Activated CD8-positive, alpha-beta T cell treated with anti-CD3 and anti-CD28 coated beads for 36 hours (primary cell): ENCODE measurements at regions of chr2 and their contacts with region 1.

Region 1: DNA sequence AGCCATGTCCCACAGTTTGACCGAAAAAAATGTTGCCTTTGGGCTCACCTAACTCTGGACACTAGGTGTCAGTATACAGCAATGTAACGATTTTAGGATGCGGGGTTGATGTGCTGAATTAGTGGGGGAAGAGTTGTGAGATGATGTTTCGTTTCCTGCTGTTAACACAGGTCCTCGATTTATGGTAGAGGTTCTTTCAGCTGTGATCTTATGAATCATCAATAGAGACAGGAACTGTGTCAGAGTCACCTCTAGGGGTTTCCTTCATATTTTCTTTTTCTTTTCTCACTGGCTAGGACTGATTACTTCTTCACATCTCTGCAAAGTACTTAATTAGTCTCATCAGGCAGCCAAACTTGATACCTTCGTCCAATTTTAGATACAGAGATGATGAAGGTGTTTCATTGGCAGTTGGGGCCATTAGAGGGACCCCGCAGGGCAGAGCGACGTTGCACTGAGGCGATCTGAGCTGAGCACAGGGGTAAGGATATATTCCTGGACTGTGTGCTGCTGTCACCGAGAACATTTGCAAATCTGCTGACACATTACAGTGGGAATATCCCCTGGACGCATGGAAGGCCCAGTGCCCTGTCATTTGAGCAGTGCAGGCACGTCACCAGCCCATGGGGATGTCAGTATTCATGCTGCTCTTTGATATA is 10.2 kb upstream of the MMADHC start:
- DNase-seq: peak; percentile 59
- ATAC-seq: peak; percentile 100
- H3K4me3 Mint-ChIP-seq: peak overlapping the region; percentile 14
- H3K27ac Mint-ChIP-seq: peak overlapping the region; percentile 44
- H3K4me1 Mint-ChIP-seq: peaks cover 22% of the 10 kb centered on the region
- H3K27me3 Mint-ChIP-seq: peaks cover 9% of the 10 kb centered on the region
- CTCF ChIP-seq: peak; percentile 71

Region 2: DNA sequence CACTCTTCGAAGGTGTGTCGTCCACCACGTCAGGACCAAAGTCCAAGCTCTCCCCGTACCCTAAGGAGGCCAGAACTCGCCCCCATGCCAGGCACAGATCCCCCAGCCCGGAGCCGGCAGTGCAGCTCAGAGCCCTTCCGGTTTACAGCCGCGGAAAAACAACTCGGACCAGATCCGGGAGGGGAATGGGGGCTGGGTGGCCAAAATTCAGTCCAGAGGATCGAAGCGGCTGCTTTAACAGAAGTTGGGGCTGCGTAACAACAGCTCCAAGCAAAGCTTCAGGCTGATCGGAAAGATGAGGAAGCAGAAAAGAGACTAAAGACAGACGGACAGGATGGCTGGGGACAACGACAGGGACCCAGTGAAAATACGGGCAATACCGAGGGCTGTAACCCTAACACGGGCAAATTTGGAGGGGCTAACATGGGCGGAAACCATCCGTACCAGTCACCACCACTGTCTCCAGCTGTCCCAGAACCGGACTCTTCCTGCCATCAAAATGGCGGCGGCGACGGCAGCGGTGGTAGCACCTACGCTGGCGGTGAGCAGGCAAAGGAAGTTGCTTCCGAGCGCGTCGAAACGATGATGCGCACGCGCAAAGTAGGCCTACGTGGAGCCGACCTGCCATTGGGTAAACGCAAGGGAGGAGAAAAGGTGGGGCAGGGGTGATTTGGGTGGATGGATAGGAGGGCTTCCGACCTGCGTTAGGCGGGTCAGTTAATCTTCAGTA is 10.4 kb before region 1 on chr2 and contains the start of gene MMADHC:
- CTCF ChIA-PET with region 1: interaction called, 22 read pairs
- POLR2A ChIA-PET with region 1: interaction called, 6 read pairs
- intact Hi-C with region 1: no loop called
- DNase-seq: peak; percentile 95
- ATAC-seq: peak; percentile 98
- H3K4me3 Mint-ChIP-seq: peak within 1 kb of the TSS; percentile 95
- H3K27ac Mint-ChIP-seq: peak within 1 kb of the TSS; percentile 98
- H3K4me1 Mint-ChIP-seq: peaks cover 39% of the 10 kb centered on the region
- H3K27me3 Mint-ChIP-seq: peaks cover 12% of the 10 kb centered on the region
- CTCF ChIP-seq: no peak
- total RNA-seq, gene MMADHC: 130 to 132 TPM

Region 3: GRCh38 chr2:150487537-150488429 is 890.0 kb after region 1 on chr2 and contains the start of gene RND3:
- CTCF ChIA-PET with region 1: interaction called, 5 read pairs
- POLR2A ChIA-PET with region 1: no interaction called
- intact Hi-C with region 1: loop called (anchors 5 kb)
- DNase-seq: peak; percentile 79
- ATAC-seq: peak; percentile 51
- H3K4me3 Mint-ChIP-seq: no peak within 1 kb of the TSS
- H3K27ac Mint-ChIP-seq: no peak within 1 kb of the TSS
- H3K4me1 Mint-ChIP-seq: peaks cover 10% of the 10 kb centered on the region
- H3K27me3 Mint-ChIP-seq: peaks cover 43% of the 10 kb centered on the region
- CTCF ChIP-seq: peak; percentile 63
- total RNA-seq, gene RND3: not detected

Region 4: GRCh38 chr2:151051574-151052220 is 1453.9 kb after region 1 on chr2:
- CTCF ChIA-PET with region 1: interaction called, 7 read pairs
- POLR2A ChIA-PET with region 1: no interaction called
- intact Hi-C with region 1: loop called (anchors 2 kb)
- DNase-seq: peak; percentile 50
- ATAC-seq: peak; percentile 85
- H3K4me3 Mint-ChIP-seq: no peak overlapping the region
- H3K27ac Mint-ChIP-seq: no peak overlapping the region
- H3K4me1 Mint-ChIP-seq: no peaks in the 10 kb centered on the region
- H3K27me3 Mint-ChIP-seq: peaks cover 7% of the 10 kb centered on the region
- CTCF ChIP-seq: peak; percentile 78

Region 5: DNA sequence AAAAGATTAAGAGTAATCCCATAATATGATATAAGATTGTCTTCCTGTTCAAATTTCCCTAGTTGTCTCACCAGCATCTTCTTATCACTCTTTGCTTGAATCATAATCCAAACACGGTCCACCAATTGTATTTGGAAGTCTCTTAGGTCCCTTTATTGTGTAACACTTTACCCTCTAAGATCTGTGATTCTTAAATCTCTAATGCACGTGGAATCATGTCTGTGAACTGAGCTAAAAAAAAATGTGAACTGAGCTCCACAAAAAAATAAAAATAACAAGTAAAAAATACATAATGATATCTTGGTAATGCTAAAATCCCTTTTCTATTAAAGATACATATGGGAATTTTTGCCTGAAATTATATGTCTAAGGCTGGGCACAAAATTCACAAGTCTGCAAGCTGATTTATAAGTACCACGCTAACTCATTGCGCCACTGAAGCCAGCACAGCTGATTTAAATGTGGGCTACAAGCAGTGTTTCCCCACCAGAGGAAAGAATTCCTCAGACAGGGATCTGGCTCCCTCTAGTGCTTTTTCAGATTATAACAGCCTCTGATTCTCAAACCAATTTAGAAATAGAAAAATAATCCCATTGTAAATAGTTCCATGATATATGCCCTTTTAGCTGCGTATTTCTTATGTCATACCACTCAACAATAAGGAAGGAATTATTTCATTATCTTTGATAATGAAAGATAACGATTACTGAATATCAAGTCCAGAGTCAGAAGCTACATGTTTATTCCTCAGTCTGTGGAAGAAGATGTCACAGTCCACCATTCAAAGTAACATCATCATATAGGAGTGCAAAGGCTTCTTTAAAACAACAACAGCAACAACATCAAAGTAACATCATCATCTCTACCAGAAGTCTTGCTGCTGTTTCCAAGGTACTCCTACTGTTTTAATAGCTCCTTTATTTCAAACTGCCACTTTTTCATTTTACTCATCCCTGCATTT is 1641.0 kb after region 1 on chr2:
- CTCF ChIA-PET with region 1: interaction called, 8 read pairs
- POLR2A ChIA-PET with region 1: no interaction called
- intact Hi-C with region 1: loop called (anchors 10 kb)
- DNase-seq: peak; percentile 59
- ATAC-seq: peak; percentile 82
- H3K4me3 Mint-ChIP-seq: no peak overlapping the region
- H3K27ac Mint-ChIP-seq: no peak overlapping the region
- H3K4me1 Mint-ChIP-seq: peaks cover 5% of the 10 kb centered on the region
- H3K27me3 Mint-ChIP-seq: no peaks in the 10 kb centered on the region
- CTCF ChIP-seq: peak; percentile 89

Region 6: GRCh38 chr2:151261231-151261976 is 1663.6 kb after region 1 on chr2 and contains the start of gene RBM43:
- CTCF ChIA-PET with region 1: no interaction called
- POLR2A ChIA-PET with region 1: no interaction called
- intact Hi-C with region 1: loop called (anchors 10 kb)
- DNase-seq: peak; percentile 89
- ATAC-seq: peak; percentile 93
- H3K4me3 Mint-ChIP-seq: peak within 1 kb of the TSS; percentile 89
- H3K27ac Mint-ChIP-seq: peak within 1 kb of the TSS; percentile 98
- H3K4me1 Mint-ChIP-seq: peaks cover 21% of the 10 kb centered on the region
- H3K27me3 Mint-ChIP-seq: no peaks in the 10 kb centered on the region
- CTCF ChIP-seq: no peak
- total RNA-seq, gene RBM43: 3.4 to 3.5 TPM